ENCODE measurements at regions of chr19 and their contacts with region 1.

Region 1: GRCh38 chr19:44718441-44719261 is 19.7 kb downstream of the CEACAM16 start:
- DNase-seq: peak; percentile 54 to 85
- H3K4me3 ChIP-seq: peak overlapping the region in 2 of 3 donors; percentile 37 to 48
- H3K27ac ChIP-seq: peak overlapping the region; percentile 85 to 92
- H3K4me1 ChIP-seq: peaks cover 0 to 14% of the 10 kb centered on the region in 2 donors
- H3K27me3 ChIP-seq: no peaks in the 10 kb centered on the region
- CTCF ChIP-seq: peak in 1 of 3 donors; percentile 8
- POLR2A ChIP-seq: no peak

Region 2: GRCh38 chr19:44770550-44771257 is 52.1 kb after region 1 on chr19:
- intact Hi-C with region 1: loop called (anchors 5 kb)
- DNase-seq: peak; percentile 96
- H3K4me3 ChIP-seq: no peak overlapping the region
- H3K27ac ChIP-seq: no peak overlapping the region
- H3K4me1 ChIP-seq: no peaks in the 10 kb centered on the region
- H3K27me3 ChIP-seq: no peaks in the 10 kb centered on the region
- CTCF ChIP-seq: peak; percentile 89 to 96 (median 91)
- POLR2A ChIP-seq: no peak

Region 3: GRCh38 chr19:44820648-44821609 is 102.3 kb after region 1 on chr19:
- intact Hi-C with region 1: no loop called
- DNase-seq: no peak
- H3K4me3 ChIP-seq: peak overlapping the region in 1 of 3 donors; percentile 0
- H3K27ac ChIP-seq: peak overlapping the region in 1 of 2 donors; percentile 74
- H3K4me1 ChIP-seq: no peaks in the 10 kb centered on the region
- H3K27me3 ChIP-seq: no peaks in the 10 kb centered on the region
- CTCF ChIP-seq: no peak
- POLR2A ChIP-seq: no peak